ENCODE measurements at regions of chr19 and their contacts with region 1.

Region 1: DNA sequence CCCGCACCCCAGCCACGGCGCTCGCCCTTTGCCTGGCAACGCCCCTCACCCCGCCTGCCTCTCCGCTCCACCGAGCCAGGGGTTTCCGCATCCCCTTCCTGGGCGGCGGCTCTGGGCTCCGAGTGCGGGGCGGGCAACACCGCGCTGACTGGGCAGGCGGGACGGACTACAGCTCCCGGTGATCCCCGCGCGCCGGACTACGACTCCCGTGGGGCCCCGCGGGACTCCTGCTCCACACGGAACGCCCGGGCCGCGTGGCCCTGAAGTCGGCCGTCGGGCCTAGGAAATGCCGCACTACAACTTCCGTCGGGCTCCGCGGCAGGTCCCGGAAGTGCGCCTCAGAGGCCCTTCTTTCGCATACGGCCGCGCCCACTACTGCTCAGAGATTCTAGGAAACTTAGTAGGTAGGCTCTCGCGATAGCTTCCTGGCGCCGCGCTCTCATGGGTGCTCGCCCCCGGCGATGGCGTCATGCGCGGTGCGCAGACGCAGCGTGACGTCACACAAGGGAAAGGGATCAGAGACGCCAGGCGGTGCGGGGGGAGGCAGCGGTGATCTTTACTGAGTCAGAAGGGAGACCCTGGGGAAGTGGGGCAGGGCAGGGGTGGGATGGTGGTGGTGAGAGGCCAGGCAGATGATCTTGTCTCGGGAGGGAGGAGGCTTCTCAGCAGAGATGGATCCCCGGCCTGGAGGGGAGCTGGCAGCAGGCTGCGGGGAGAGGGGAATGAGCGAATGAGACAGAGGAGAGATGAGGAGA is at the start of gene JOSD2:
- DNase-seq: peak; percentile 100
- H3K4me3 ChIP-seq: peak within 1 kb of the TSS; percentile 63
- H3K27ac ChIP-seq: peak within 1 kb of the TSS; percentile 90
- H3K4me1 ChIP-seq: peaks cover 6% of the 10 kb centered on the region
- H3K27me3 ChIP-seq: no peaks in the 10 kb centered on the region
- CTCF ChIP-seq: no peak
- total RNA-seq, gene JOSD2: 26.8 and 31.9 TPM in 2 replicates

Region 2: DNA sequence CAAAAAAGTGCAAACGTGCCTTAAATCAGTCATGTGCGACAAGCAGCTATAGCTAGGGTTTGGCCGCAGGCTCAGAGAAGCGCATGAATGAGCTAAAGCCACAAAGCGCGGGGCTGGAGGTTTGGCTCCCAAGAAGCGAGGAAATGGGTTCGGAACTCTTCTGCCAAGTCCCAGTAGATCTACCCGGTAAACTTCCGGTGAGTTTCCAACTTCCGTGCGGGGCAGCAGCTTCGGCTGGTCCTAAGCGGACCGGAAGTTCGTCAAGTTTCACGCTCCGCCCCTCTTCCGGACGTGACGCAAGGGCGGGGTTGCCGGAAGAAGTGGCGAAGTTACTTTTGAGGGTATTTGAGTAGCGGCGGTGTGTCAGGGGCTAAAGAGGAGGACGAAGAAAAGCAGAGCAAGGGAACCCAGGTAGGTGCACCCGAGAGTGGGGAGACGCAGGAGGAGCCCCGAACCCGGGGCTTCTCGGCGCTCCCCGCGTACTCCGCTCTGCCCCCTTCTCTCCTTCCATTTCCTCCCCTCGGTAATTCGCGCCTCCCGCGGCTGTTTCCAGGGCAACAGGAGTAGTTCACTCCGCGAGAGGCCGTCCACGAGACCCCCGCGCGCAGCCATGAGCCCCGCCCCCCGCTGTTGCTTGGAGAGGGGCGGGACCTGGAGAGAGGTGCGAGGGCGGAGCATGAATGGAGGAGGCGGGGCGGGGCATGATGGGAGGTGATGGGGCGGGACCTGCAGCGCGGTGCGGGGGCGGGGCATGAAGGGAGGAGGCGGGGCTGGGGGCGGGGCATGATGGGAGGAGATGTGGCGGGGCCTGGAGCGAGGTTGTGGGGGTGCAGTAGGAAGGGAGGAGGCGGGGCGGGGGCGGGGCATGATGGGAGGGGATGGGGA is 134.8 kb before region 1 on chr19 and contains the start of gene NR1H2:
- CTCF ChIA-PET with region 1: no interaction called
- POLR2A ChIA-PET with region 1: interaction called, 3 read pairs
- intact Hi-C with region 1: loop called (anchors 5 kb)
- DNase-seq: peak; percentile 98
- H3K4me3 ChIP-seq: peak within 1 kb of the TSS; percentile 89
- H3K27ac ChIP-seq: peak within 1 kb of the TSS; percentile 100
- H3K4me1 ChIP-seq: peaks cover 8% of the 10 kb centered on the region
- H3K27me3 ChIP-seq: no peaks in the 10 kb centered on the region
- CTCF ChIP-seq: no peak
- total RNA-seq, gene NR1H2: 42.7 and 45.0 TPM in 2 replicates

Region 3: GRCh38 chr19:50486823-50487511 is 24.3 kb before region 1 on chr19:
- CTCF ChIA-PET with region 1: interaction called, 10 read pairs
- POLR2A ChIA-PET with region 1: no interaction called
- intact Hi-C with region 1: no loop called
- DNase-seq: peak; percentile 78
- H3K4me3 ChIP-seq: no peak overlapping the region
- H3K27ac ChIP-seq: no peak overlapping the region
- H3K4me1 ChIP-seq: no peaks in the 10 kb centered on the region
- H3K27me3 ChIP-seq: peaks cover 36% of the 10 kb centered on the region
- CTCF ChIP-seq: peak; percentile 67

Region 4: GRCh38 chr19:50602935-50603334 is 91.7 kb after region 1 on chr19:
- CTCF ChIA-PET with region 1: no interaction called
- POLR2A ChIA-PET with region 1: interaction called, 12 read pairs
- intact Hi-C with region 1: no loop called
- DNase-seq: no peak
- H3K4me3 ChIP-seq: no peak overlapping the region
- H3K27ac ChIP-seq: no peak overlapping the region
- H3K4me1 ChIP-seq: peaks cover 5% of the 10 kb centered on the region
- H3K27me3 ChIP-seq: peaks cover 9% of the 10 kb centered on the region
- CTCF ChIP-seq: no peak